ENCODE measurements at regions of chr17 and their contacts with region 1.

Region 1: GRCh38 chr17:7177196-7177953 is 1.8 kb downstream of the ASGR1 start:
- DNase-seq: peak; percentile 48 to 76 (median 62)
- ATAC-seq: peak; percentile 88
- H3K4me3 ChIP-seq: peak overlapping the region; percentile 50
- H3K4me3 Mint-ChIP-seq: peak overlapping the region in 8 of 10 donors; percentile 68 to 83 (median 81)
- H3K27ac ChIP-seq: no peak overlapping the region
- H3K27ac Mint-ChIP-seq: peak overlapping the region in 5 of 9 donors; percentile 18 to 66 (median 51)
- H3K4me1 ChIP-seq: peaks cover 12 to 23% of the 10 kb centered on the region in 2 donors
- H3K4me1 Mint-ChIP-seq: peaks cover 4 to 13% (median 9%) of the 10 kb centered on the region in 7 donors
- H3K27me3 ChIP-seq: no peaks in the 10 kb centered on the region
- H3K27me3 Mint-ChIP-seq: peaks cover 0 to 17% (median 8%) of the 10 kb centered on the region in 5 donors

Region 2: DNA sequence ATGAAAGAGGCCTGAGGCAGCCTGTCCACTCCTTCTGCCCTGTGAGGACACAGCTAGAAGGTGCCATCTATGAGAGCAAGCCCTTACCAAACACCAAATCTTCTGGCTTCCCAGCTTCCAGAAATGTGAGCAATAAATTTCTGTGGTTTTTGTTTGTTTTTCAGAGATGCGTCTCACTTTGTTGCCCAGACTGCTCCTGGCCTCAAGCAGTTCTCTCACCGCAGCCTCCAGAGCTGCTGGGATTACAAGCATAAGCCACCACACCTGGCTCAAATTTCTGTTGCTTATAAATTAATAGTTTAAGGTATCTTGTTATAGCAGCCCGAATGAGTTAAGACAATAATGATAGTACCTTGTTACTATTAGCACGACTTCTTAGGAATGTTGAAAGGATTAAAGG is 121.0 kb before region 1 on chr17:
- CTCF ChIA-PET with region 1: interaction called, 6 read pairs
- POLR2A ChIA-PET with region 1: no interaction called
- intact Hi-C with region 1: loop called in 1 of 2 experiments (anchors 1 kb)
- DNase-seq: no peak
- ATAC-seq: no peak
- H3K4me3 ChIP-seq: no peak overlapping the region
- H3K4me3 Mint-ChIP-seq: no peak overlapping the region
- H3K27ac ChIP-seq: no peak overlapping the region
- H3K27ac Mint-ChIP-seq: no peak overlapping the region
- H3K4me1 ChIP-seq: no peaks in the 10 kb centered on the region
- H3K4me1 Mint-ChIP-seq: peaks cover 0 to 9% (median 4%) of the 10 kb centered on the region in 7 donors
- H3K27me3 ChIP-seq: no peaks in the 10 kb centered on the region
- H3K27me3 Mint-ChIP-seq: peaks cover 0 to 5% (median 0%) of the 10 kb centered on the region in 5 donors

Region 3: DNA sequence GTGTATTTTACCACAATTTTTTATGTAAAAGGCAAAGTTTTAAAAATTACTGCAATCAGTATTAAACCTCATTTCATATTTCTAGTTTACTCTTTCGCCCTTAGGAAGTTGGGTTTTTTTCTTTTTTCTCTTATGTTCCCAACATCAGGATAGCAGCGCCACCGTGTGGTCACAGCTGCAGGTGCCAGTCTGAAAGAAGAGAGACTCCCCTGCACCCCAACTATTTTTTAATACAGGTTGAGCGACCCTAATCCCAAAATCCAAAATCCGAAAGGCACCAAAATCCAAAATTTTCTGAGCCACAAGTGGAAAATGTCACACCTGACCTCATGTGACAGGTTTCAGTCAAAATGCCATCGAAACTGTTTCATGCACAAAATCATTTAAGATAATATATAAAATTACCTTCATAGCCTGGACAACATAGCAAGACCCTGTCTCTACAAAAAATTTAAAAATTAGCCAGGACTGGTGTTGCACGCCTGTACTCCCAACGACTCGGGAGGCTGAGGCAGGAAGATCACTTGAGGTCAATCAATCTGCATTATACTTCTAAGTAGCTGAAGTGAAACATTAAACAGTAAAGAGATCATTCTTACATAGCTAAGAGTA is 41.0 kb before region 1 on chr17:
- CTCF ChIA-PET with region 1: interaction called, 3 read pairs
- POLR2A ChIA-PET with region 1: no interaction called
- intact Hi-C with region 1: loop called (anchors 1 to 2 kb)
- DNase-seq: peak; percentile 53 to 74 (median 71)
- ATAC-seq: peak; percentile 24
- H3K4me3 ChIP-seq: no peak overlapping the region
- H3K4me3 Mint-ChIP-seq: peak overlapping the region in 4 of 10 donors; percentile 32 to 53 (median 44)
- H3K27ac ChIP-seq: no peak overlapping the region
- H3K27ac Mint-ChIP-seq: peak overlapping the region in 4 of 9 donors; percentile 8 to 48 (median 28)
- H3K4me1 ChIP-seq: peaks cover 6 to 20% of the 10 kb centered on the region in 2 donors
- H3K4me1 Mint-ChIP-seq: peaks cover 13 to 34% (median 23%) of the 10 kb centered on the region in 7 donors
- H3K27me3 ChIP-seq: no peaks in the 10 kb centered on the region
- H3K27me3 Mint-ChIP-seq: peaks cover 0 to 24% (median 6%) of the 10 kb centered on the region in 5 donors

Region 4: GRCh38 chr17:7204828-7205461 is 27.6 kb after region 1 on chr17:
- CTCF ChIA-PET with region 1: interaction called, 3 read pairs
- POLR2A ChIA-PET with region 1: no interaction called
- intact Hi-C with region 1: loop called in 1 of 2 experiments (anchors 2 kb)
- DNase-seq: peak; percentile 90 to 99 (median 97)
- ATAC-seq: peak; percentile 90
- H3K4me3 ChIP-seq: peak overlapping the region; percentile 77
- H3K4me3 Mint-ChIP-seq: peak overlapping the region; percentile 67 to 94 (median 85)
- H3K27ac ChIP-seq: peak overlapping the region; percentile 91
- H3K27ac Mint-ChIP-seq: peak overlapping the region; percentile 88 to 99 (median 95)
- H3K4me1 ChIP-seq: peaks cover 15 to 17% of the 10 kb centered on the region in 2 donors
- H3K4me1 Mint-ChIP-seq: peaks cover 28 to 39% (median 32%) of the 10 kb centered on the region in 7 donors
- H3K27me3 ChIP-seq: no peaks in the 10 kb centered on the region
- H3K27me3 Mint-ChIP-seq: no peaks in the 10 kb centered on the region

Region 5: DNA sequence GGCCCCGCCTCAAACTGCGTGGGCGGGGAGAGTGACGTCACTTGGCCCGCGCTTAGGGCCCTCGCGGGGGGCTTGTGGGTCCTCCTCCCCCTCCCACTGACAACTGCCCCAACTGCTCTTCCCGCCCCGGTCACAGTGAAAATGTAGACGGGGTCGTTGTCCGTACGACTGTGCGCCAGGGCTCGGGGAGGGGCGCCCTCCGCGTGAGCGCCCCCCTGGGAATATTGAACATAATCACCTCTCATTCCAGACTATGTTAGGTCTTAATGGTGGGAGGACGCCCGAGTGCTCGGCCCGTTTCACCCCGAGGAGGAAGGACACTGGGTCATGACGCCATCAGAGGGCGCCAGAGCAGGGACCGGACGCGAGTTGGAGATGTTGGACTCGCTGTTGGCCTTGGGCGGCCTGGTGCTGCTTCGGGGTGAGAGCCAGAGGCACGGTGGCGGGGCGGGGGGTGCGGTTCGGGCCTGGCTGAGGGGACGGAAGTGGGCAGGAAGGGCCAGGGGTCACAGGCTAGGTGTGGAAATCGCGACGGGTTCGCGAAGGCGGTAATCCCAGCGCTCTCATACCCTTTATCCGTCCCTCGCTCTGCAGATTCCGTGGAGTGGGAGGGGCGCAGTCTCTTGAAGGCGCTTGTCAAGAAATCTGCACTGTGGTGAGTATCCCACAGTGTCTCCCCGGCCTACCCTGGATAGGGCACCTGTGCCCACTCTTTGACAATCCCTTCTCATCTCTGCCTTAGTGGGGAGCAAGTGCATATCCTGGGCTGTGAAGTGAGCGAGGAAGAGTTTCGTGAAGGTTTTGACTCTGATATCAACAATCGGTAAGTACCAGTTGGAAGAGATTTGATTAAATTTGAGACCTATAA is 75.0 kb after region 1 on chr17 and contains the start of gene ELP5:
- CTCF ChIA-PET with region 1: no interaction called
- POLR2A ChIA-PET with region 1: no interaction called
- intact Hi-C with region 1: no loop called
- DNase-seq: peak in 5 of 9 donors; percentile 73 to 90 (median 83)
- ATAC-seq: peak; percentile 69
- H3K4me3 ChIP-seq: peak within 1 kb of the TSS; percentile 91
- H3K4me3 Mint-ChIP-seq: peak within 1 kb of the TSS; percentile 85 to 98 (median 96)
- H3K27ac ChIP-seq: peak within 1 kb of the TSS; percentile 94
- H3K27ac Mint-ChIP-seq: peak within 1 kb of the TSS; percentile 95 to 100 (median 99)
- H3K4me1 ChIP-seq: peaks cover 22 to 32% of the 10 kb centered on the region in 2 donors
- H3K4me1 Mint-ChIP-seq: peaks cover 29 to 51% (median 42%) of the 10 kb centered on the region in 7 donors
- H3K27me3 ChIP-seq: no peaks in the 10 kb centered on the region
- H3K27me3 Mint-ChIP-seq: peaks cover 0 to 4% (median 0%) of the 10 kb centered on the region in 5 donors
- total RNA-seq, gene ELP5: 26.9 to 49.1 (median 32.9) TPM